ENCODE measurements at regions of chr5 and their contacts with region 1.

Region 1: GRCh38 chr5:43066799-43067741 is 27.0 kb upstream of the ANXA2R start:
- DNase-seq: peak; percentile 93
- ATAC-seq: peak; percentile 89
- H3K4me3 ChIP-seq: peak overlapping the region; percentile 57 to 71
- H3K27ac ChIP-seq: peak overlapping the region; percentile 84 to 94
- H3K4me1 ChIP-seq: no peaks in the 10 kb centered on the region
- H3K27me3 ChIP-seq: no peaks in the 10 kb centered on the region

Region 2: GRCh38 chr5:42950440-42951292 is 116.4 kb before region 1 on chr5:
- intact Hi-C with region 1: loop called in 1 of 2 experiments (anchors 10 kb)
- DNase-seq: peak; percentile 88
- ATAC-seq: peak; percentile 86
- H3K4me3 ChIP-seq: peak overlapping the region; percentile 11 to 58
- H3K27ac ChIP-seq: peak overlapping the region in 1 of 2 donors; percentile 78
- H3K4me1 ChIP-seq: no peaks in the 10 kb centered on the region
- H3K27me3 ChIP-seq: no peaks in the 10 kb centered on the region

Region 3: DNA sequence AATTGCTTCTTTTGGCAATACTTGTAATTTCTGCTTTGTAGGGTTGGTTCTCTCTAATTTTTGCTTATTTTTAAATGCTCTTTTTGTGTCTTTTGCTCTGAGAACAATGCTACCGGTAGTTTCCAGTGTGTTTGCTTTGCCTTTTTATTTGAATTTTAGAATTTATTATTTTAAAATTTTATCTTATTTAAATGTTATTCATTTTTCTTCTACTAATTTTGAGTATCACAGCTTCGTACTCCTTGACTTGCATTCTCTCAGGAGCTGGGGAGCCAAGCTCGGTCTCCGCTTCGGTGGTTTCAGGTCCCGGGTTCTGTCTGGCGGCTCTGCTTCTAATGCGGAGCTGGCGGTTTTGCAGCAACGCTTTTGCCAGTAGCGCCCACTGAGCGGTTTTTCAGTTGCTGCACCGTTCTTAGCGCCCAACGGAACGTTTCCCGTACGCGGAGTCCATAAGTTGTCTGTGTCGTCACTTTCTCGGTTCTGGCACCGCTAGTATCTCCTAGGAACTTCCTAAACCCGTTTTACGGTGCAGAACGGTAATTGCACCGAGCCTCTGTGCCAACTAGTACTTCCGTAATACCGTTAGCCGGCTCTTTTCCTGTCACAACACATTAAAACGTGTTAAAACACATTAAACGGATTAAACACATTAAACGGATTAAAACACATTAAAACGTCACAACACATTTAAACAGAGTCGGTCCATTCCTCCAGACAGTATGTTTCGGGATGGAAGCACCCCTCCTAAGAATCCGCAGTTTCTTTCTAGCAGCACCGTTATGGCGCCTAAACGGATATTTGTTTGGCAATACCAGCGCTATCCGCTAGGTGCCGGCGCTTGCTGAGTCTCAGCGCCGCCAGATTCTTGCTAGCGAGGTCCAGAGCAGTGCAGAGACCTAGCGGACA is 72.6 kb before region 1 on chr5:
- intact Hi-C with region 1: loop called (anchors 2 to 5 kb)
- DNase-seq: peak; percentile 92
- ATAC-seq: peak; percentile 92
- H3K4me3 ChIP-seq: peak overlapping the region; percentile 1 to 56
- H3K27ac ChIP-seq: peak overlapping the region in 1 of 2 donors; percentile 61
- H3K4me1 ChIP-seq: peaks cover 0 to 3% of the 10 kb centered on the region in 2 donors
- H3K27me3 ChIP-seq: no peaks in the 10 kb centered on the region

Region 4: DNA sequence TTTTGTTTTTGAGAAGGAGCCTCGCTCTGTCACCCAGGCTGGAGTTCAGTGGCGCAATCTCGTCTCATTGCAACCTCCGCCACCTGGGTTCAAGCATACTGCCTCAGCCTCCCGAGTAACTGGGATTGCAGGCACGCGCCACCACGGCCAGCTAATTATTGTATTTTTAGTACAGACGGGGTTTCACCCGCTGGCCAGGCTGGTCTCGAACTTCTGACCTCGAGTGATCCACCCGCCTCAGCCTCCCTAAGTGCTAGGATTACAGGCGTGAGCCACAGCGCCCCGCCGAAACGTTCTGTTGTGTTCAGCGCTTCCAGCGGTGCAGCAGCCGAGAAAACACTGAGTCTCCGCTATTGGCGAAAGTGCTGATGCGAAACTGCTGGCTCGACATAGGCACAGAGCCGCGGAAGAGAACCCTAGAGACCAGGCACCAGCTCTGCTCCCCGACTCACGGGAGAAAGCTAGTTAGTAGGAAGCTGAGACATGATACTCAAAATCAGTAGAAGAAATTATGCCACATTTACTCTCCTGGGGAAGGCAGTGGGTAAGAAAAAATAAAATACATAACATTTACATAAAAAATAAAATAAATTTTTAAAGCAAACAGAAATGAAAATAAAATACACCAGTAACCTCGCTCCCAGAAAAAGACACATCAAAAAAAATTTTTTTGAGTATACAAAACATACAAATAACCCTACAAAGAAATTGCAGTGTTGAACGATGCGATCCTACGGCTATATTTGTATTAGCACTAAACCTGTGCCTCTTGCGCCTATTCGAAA is 58.5 kb before region 1 on chr5:
- intact Hi-C with region 1: loop called in 1 of 2 experiments (anchors 2 kb)
- DNase-seq: peak; percentile 92
- ATAC-seq: peak; percentile 93
- H3K4me3 ChIP-seq: peak overlapping the region; percentile 32 to 61
- H3K27ac ChIP-seq: peak overlapping the region in 1 of 2 donors; percentile 25
- H3K4me1 ChIP-seq: no peaks in the 10 kb centered on the region
- H3K27me3 ChIP-seq: no peaks in the 10 kb centered on the region

Region 5: DNA sequence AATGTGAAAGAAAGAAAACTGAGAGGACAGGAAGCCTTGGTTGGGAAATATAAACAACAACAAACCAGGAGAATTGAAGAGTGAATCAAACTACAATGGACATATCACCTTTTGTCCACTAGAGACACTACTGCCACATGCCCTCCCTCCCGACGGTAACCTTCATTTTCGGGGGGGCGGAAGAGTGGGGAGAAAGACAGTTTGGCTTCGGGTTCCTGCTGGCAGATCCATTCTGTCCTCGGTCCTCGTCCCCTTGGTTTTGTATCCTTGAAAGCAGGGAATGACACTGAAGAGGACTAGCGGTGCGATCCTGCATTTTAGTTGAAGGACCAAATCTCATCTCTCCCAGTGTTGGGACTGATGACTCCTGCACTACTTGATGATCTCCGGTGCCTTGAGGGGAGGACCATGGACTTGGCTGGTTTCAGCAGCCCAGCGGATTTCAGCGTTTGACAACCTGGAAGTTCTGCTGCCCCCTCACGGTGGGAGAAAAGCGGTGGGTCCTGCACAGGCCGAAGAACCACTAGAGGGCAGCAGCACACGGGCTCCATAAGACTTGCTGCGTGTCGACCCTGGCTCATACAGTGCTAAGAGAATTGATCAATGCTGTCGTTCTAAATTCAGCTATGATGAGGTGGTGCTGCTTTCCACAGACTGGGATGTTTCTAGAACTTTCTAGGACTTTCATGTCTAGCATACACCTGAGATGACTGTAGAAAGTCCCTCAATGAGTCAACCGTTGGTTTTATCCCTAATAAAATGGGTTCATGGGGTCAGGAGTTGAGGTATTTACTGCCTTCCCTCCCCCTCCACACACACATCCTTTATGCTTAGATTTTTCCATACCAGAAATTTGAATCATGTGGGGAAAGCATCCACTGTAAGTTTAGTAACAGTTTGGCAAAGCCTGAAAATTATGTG is 38.6 kb after region 1 on chr5:
- intact Hi-C with region 1: loop called (anchors 5 kb)
- DNase-seq: peak; percentile 93 to 96
- ATAC-seq: peak; percentile 98
- H3K4me3 ChIP-seq: peak overlapping the region in 1 of 2 donors; percentile 25
- H3K27ac ChIP-seq: no peak overlapping the region
- H3K4me1 ChIP-seq: no peaks in the 10 kb centered on the region
- H3K27me3 ChIP-seq: no peaks in the 10 kb centered on the region

Measured in aorta (tissue), 5 donors.